Calu3 (cell line): ENCODE measurements at regions of chr2 and their contacts with region 1.

Region 1: DNA sequence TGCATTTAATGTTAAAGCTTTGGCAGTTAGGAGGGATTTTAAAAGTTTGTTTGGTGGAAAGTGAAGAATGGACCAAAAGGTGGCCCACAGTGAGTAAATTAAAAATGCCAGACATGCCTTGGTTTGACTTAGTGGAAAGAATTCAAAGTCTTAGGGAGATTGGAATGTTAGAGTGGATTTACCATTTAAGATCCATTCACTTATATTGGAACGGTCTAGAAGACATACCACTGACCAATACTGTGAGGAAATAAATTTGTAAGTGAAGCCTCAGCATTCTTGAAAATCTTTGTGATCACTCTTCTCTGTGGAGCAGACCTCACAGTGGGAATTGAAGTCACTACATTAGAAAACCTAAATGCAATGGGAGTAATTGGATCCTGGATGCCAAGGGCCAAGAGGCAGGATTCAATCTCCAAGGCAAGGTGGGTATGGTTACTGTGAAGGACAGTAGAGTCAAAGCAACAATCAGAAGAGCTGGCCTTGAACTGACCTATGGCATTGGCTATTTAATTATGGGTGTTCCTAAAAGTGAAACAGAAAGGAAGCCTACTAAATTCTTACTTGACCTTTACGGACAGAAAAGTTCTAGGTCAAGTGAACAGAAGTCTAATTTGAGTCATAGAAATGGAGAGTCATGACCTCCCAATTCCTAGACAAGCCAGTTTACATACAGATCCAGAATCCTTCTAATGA is 40.2 kb upstream of the VRK2 start:
- DNase-seq: no peak
- H3K4me3 Mint-ChIP-seq: no peak overlapping the region
- H3K27ac Mint-ChIP-seq: no peak overlapping the region
- H3K4me1 Mint-ChIP-seq: peaks cover 11% of the 10 kb centered on the region
- H3K27me3 Mint-ChIP-seq: no peaks in the 10 kb centered on the region
- CTCF ChIP-seq: no peak

Region 2: DNA sequence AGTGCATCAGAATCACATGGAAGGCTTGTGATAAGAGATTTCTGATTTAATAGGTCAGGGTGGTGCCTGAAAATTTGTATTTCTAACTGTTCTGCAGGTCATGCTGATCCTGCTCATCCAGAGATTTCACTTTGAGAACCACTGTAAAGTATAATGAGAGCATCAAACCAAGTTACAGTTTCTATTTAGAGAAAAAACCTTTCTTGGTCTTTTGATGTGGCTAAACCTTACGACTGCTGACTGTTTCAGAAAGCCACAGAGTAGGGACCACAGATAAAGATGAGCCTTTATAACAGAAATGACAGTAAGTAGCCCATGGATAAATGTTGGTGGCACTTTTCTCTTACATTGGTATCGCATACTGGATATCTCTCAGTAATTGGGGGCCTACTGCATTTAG is 344.1 kb after region 1 on chr2:
- CTCF ChIA-PET with region 1: no interaction called
- intact Hi-C with region 1: loop called (anchors 10 kb)
- DNase-seq: no peak
- H3K4me3 Mint-ChIP-seq: no peak overlapping the region
- H3K27ac Mint-ChIP-seq: no peak overlapping the region
- H3K4me1 Mint-ChIP-seq: no peaks in the 10 kb centered on the region
- H3K27me3 Mint-ChIP-seq: no peaks in the 10 kb centered on the region
- CTCF ChIP-seq: no peak